Gastrocnemius medialis (tissue), 4 donors: ENCODE measurements at regions of chr3 and their contacts with region 1.

Region 1: DNA sequence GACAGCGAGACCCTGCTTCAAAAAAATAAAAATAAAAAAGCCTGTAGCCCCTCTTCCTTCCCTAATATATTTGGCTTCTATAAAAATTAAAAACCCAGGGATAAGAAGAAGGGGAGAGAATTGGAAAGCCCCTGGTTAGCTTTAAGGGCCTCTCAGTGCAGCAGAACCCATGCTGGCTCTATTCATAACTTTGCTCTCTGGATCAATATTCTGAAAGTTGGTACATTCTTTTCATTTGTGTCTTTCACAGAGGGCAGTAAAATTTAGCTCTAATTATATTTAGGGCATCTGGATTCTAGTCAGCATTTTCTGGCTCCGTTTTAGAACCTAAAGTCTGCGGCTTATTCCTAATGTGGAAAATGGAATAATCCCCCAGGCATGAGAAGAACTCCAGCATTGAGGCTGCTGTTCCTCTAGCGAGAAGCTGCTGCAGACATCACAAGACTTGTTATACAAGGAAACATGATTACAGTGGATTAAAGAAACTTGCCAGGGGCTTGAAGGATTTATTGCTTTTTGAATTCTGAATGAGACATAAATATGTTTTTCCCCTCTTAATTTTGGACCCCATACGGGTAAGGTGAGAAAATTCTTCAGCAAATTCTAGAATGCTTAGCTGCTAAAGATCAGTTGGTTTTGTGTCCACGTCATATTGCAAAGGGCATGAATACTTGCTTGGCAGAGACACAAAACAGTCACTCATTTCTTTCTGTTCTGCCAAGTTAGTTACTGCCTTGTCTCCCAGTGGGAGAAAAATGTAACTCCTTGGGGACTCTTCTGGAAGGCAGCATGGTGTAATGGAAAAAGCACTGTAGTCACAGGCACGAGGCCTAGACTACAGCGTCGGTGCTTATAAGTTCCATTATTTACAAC is 177.7 kb downstream of the VGLL4 start:
- DNase-seq: peak; percentile 47 to 57
- ATAC-seq: peak; percentile 52 to 72
- H3K4me3 ChIP-seq: no peak overlapping the region
- H3K27ac ChIP-seq: peak overlapping the region; percentile 83 to 87 (median 86)
- H3K4me1 ChIP-seq: peaks cover 47 to 52% of the 10 kb centered on the region in 2 donors
- H3K27me3 ChIP-seq: no peaks in the 10 kb centered on the region
- CTCF ChIP-seq: no peak
- POLR2A ChIP-seq: no peak

Region 2: GRCh38 chr3:11509173-11510000 is 43.4 kb after region 1 on chr3:
- in situ Hi-C with region 1: no loop called
- intact Hi-C with region 1: loop called (anchors 5 kb)
- DNase-seq: peak; percentile 32 to 59
- ATAC-seq: peak; percentile 86 to 89
- H3K4me3 ChIP-seq: peak overlapping the region in 2 of 4 donors; percentile 0 to 15
- H3K27ac ChIP-seq: peak overlapping the region; percentile 76 to 92 (median 87)
- H3K4me1 ChIP-seq: peaks cover 28 to 31% of the 10 kb centered on the region in 2 donors
- H3K27me3 ChIP-seq: no peaks in the 10 kb centered on the region
- CTCF ChIP-seq: peak in 2 of 5 experiments; percentile 10 to 23
- POLR2A ChIP-seq: no peak

Region 3: GRCh38 chr3:11568503-11569155 is 102.6 kb after region 1 on chr3:
- in situ Hi-C with region 1: no loop called
- intact Hi-C with region 1: loop called (anchors 2 kb)
- DNase-seq: peak; percentile 74 to 75
- ATAC-seq: peak; percentile 40 to 67
- H3K4me3 ChIP-seq: peak overlapping the region; percentile 20 to 42 (median 34)
- H3K27ac ChIP-seq: peak overlapping the region; percentile 88 to 90 (median 88)
- H3K4me1 ChIP-seq: peaks cover 42 to 54% of the 10 kb centered on the region in 2 donors
- H3K27me3 ChIP-seq: no peaks in the 10 kb centered on the region
- CTCF ChIP-seq: no peak
- POLR2A ChIP-seq: peak; percentile 11 to 22